Sigmoid colon (tissue), 7 donors: ENCODE measurements at regions of chr1 and their contacts with region 1.

Region 1: GRCh38 chr1:32394141-32394889 is at the start of gene BSDC1:
- DNase-seq: peak; percentile 99
- H3K4me3 ChIP-seq: peak within 1 kb of the TSS; percentile 81 to 94 (median 88)
- H3K27ac ChIP-seq: peak within 1 kb of the TSS; percentile 92 to 95 (median 94)
- H3K4me1 ChIP-seq: peaks cover 0 to 42% (median 28%) of the 10 kb centered on the region in 4 donors
- H3K27me3 ChIP-seq: no peaks in the 10 kb centered on the region
- CTCF ChIP-seq: no peak
- EP300 ChIP-seq: no peak
- POLR2A ChIP-seq: peak; percentile 88 to 89
- total RNA-seq, gene BSDC1: 52.8 to 76.7 (median 62.1) TPM

Region 2: DNA sequence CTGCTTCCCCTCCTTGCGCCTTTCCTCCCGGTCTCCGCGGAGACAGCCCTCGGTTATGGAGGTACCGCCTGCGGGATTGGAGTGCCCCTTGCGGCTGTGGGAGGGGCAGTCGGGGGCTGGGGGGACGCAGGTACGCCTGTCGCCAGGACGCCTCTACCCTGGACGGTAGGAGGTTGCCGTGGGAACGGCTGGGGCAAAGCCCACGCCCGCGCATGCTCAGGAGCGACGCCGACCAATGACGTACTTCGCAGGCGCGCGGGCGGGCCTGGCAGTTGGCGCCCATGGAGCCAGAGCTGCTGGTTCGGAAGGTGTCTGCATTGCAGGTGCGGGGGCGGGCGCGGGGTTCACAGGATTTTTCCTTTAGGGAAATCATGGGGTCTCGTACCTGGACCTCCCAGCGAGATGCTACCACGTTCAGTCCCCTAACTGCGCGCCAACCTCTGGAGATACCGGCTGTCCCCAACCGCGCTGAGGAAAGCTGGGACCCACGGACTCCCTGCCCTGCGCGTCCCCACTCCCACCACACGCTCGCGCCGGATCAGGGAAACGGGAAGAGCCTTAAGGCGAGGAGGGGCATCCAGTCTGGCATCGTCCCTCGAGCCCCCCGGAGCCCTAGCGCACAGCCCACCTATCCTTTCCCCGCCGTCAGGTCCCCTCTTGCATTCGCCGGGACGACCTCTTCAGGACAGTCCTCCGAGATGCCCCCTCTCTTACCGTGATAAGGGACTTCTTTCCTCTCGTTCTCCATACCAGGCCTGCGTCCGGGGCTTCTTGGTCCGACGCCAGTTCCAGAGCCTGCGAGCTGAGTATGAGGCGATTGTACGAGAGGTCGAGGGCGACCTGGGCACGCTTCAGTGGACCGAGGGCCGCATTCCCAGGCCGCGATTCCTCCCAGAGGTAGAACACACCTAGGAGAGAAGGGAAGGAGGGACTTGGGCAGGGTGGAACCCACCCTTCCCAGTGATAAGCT is 188.6 kb before region 1 on chr1 and contains the start of gene IQCC:
- intact Hi-C with region 1: loop called (anchors 5 kb)
- DNase-seq: peak; percentile 93
- H3K4me3 ChIP-seq: peak within 1 kb of the TSS; percentile 33 to 62 (median 60)
- H3K27ac ChIP-seq: peak within 1 kb of the TSS; percentile 25 to 68 (median 66)
- H3K4me1 ChIP-seq: peaks cover 0 to 42% (median 29%) of the 10 kb centered on the region in 4 donors
- H3K27me3 ChIP-seq: no peaks in the 10 kb centered on the region
- CTCF ChIP-seq: no peak
- EP300 ChIP-seq: no peak
- POLR2A ChIP-seq: no peak
- total RNA-seq, gene IQCC: 0.81 to 3.9 (median 2.1) TPM

Region 3: DNA sequence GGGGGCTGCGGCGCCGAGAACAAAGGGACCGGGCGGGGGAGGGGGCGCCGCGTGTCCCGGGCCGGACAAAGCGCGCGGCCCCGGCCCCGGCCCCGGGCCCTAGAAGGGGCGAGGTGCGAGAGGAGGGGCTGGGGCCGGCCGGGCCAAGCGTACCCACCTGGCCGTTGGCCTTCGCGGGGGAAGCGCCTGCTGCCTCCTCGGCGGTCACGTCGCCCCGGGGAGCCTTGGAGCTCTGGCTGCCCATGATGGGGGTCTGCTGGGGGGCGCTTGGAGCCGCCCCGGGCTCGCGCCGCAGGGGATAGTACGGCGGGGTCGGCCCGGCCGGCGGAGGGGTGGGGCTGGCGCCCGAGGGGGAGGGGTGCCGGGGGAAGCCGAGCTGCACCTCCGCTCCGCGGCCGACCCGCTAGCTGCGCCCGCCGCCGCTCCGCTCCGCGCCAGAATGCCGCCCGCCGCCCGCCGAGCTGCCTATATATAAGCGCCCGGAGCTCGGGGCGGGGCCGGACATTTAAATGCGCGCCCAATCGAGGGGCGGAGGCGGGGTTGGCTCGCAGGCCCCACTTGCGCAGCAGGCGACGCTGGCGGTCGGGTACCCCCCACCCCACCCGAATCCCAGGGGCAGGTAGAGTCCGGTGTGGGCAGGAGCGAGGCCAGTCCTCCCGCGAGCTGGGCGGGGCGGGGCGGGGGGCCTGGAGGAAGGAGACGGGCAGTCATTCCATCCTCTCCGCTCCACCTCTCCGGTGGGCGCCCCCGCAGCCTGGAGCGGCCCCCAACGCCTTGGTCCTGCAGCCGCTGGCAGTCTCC is 58.3 kb before region 1 on chr1 and contains the start of gene MARCKSL1:
- intact Hi-C with region 1: loop called (anchors 5 kb)
- DNase-seq: peak; percentile 91
- H3K4me3 ChIP-seq: peak within 1 kb of the TSS; percentile 38 to 73 (median 60)
- H3K27ac ChIP-seq: peak within 1 kb of the TSS; percentile 45 to 65 (median 54)
- H3K4me1 ChIP-seq: peaks cover 0 to 25% (median 22%) of the 10 kb centered on the region in 4 donors
- H3K27me3 ChIP-seq: no peaks in the 10 kb centered on the region
- CTCF ChIP-seq: no peak
- EP300 ChIP-seq: no peak
- POLR2A ChIP-seq: no peak
- total RNA-seq, gene MARCKSL1: 4.1 to 9.7 (median 6.6) TPM